ENCODE measurements at regions of chr15 and their contacts with region 1.

Region 1: GRCh38 chr15:40307421-40308211 is at the start of gene PLCB2:
- DNase-seq: peak; percentile 57 to 83 (median 79)
- ATAC-seq: peak; percentile 83
- H3K4me3 ChIP-seq: peak within 1 kb of the TSS; percentile 99
- H3K4me3 Mint-ChIP-seq: peak within 1 kb of the TSS; percentile 93 to 99 (median 96)
- H3K27ac ChIP-seq: peak within 1 kb of the TSS; percentile 94
- H3K27ac Mint-ChIP-seq: peak within 1 kb of the TSS; percentile 93 to 99 (median 97)
- H3K4me1 ChIP-seq: peaks cover 16 to 22% of the 10 kb centered on the region in 2 donors
- H3K4me1 Mint-ChIP-seq: peaks cover 31 to 62% (median 48%) of the 10 kb centered on the region in 7 donors
- H3K27me3 ChIP-seq: no peaks in the 10 kb centered on the region
- H3K27me3 Mint-ChIP-seq: peaks cover 0 to 13% (median 0%) of the 10 kb centered on the region in 5 donors
- total RNA-seq, gene PLCB2: 179 to 359 (median 186) TPM

Region 2: DNA sequence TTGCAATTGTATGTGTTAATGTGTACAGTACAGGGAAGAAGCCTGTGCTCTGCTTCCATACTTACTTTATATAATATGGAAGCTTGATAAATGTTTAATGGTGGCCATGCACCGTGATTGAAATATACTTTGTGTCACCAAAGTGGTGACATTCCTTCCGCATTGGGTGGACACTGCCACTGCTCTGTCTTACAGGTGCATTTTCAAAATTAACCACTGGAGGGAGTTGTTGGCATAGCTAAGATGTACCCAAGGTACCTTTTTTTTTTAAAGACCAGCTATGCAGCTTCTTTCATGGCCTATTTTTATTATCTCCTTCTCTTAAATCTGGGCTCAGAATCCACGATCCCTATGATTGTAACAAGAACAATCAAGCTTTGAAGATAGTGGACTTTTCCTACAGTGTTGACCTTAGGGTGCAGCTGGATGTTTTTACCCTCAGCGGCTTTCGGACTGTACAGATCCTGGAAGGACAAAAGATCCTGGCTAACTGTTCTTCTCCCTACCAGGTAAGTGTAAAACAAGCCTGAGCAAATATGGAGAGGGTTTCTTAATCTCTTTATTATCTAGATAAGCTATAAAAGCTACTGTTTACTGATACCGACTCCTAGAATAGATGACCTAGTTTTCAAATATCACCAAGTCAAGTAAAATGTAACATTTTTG is 90.3 kb before region 1 on chr15:
- CTCF ChIA-PET with region 1: interaction called, 7 read pairs
- POLR2A ChIA-PET with region 1: interaction called, 4 read pairs
- intact Hi-C with region 1: loop called in 1 of 2 experiments (anchors 1 kb)
- DNase-seq: peak in 7 of 9 donors; percentile 50 to 75 (median 63)
- ATAC-seq: peak; percentile 96
- H3K4me3 ChIP-seq: no peak overlapping the region
- H3K4me3 Mint-ChIP-seq: no peak overlapping the region
- H3K27ac ChIP-seq: no peak overlapping the region
- H3K27ac Mint-ChIP-seq: no peak overlapping the region
- H3K4me1 ChIP-seq: no peaks in the 10 kb centered on the region
- H3K4me1 Mint-ChIP-seq: peaks cover 0 to 2% (median 0%) of the 10 kb centered on the region in 7 donors
- H3K27me3 ChIP-seq: no peaks in the 10 kb centered on the region
- H3K27me3 Mint-ChIP-seq: no peaks in the 10 kb centered on the region

Region 3: DNA sequence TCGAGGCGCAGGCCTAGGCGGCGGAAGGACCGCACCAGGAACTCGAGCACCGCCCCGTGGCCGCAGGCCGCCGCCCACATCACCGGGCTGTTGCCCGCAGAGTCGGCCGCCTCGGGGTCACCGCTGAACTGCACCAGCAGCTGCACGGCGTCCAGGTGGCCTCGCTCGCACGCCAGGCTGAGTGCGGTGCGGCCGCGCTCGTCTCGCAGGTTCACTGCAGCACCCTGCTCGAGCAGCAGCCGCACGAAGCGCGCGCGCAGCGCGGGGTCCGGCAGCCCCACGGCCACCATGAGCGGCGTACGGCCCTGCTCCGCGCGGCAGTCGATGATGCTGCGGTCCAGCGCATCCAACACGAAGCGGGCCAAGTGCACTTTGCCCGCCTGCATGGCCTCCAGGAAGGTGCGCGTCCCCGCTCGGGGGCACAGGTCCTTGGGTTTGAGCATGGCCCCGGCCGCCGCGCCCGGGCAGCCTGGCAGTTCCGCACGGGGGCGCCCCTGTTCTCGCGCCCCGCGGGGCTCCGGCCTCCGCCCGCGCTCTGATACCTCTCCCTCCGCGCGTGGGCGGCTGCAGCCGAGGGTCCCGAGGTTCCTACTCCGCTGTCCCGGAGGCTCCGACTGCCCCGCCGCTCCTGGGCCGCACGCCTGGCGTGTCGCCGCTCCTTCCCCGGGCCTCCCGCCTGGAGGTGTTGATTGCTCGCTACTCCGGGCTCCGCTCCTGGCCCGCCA is 25.3 kb before region 1 on chr15:
- CTCF ChIA-PET with region 1: interaction called, 143 read pairs
- POLR2A ChIA-PET with region 1: interaction called, 30 read pairs
- intact Hi-C with region 1: loop called (anchors 1 kb)
- DNase-seq: peak in 7 of 9 donors; percentile 39 to 66 (median 50)
- ATAC-seq: peak; percentile 79
- H3K4me3 ChIP-seq: peak overlapping the region; percentile 57
- H3K4me3 Mint-ChIP-seq: peak overlapping the region in 9 of 10 donors; percentile 42 to 77 (median 67)
- H3K27ac ChIP-seq: no peak overlapping the region
- H3K27ac Mint-ChIP-seq: no peak overlapping the region
- H3K4me1 ChIP-seq: peaks cover 0 to 3% of the 10 kb centered on the region in 2 donors
- H3K4me1 Mint-ChIP-seq: peaks cover 0 to 11% (median 5%) of the 10 kb centered on the region in 7 donors
- H3K27me3 ChIP-seq: peaks cover 0 to 13% of the 10 kb centered on the region in 2 donors
- H3K27me3 Mint-ChIP-seq: peaks cover 17 to 46% (median 21%) of the 10 kb centered on the region in 5 donors

Region 4: DNA sequence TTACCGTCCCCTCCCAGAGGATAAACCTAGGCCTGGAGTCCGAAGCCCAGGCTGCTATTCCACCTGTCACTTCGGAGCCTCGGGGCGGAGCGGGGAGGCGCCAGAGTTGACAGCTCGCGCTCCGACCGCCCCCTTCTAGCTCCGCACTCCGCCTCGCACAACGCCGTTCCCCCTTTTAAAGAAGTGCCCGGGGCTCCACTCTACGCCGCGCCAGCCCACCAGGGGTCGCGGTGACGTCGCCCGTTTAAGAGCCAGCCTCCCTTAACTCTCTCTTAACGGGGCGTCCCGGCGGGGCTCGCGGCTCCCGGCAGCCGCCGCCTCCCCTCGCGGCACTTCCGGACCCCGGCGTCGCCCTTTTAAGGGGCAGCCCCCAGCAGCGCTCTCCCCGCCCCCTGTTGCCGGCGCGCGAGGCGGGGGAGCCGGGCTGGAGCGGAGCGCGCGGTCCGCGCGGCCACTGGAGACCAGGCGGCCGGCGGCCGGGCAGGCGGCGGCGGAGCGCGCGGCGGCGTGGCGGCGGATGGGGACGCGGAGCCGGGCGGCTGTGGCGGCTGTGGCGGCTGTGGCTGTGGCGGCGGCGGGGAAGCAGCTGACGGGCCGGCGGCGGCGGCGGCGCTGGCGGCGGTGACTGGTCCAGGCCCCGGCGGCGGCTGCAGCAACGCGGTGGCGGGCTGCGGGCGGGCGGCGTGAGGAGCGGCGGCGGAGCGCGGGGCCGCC is 15.8 kb after region 1 on chr15 and contains the start of gene INAFM2:
- CTCF ChIA-PET with region 1: interaction called, 76 read pairs
- POLR2A ChIA-PET with region 1: interaction called, 93 read pairs
- intact Hi-C with region 1: loop called (anchors 1 kb)
- DNase-seq: peak; percentile 77 to 91 (median 89)
- ATAC-seq: peak; percentile 95
- H3K4me3 ChIP-seq: peak within 1 kb of the TSS; percentile 34
- H3K4me3 Mint-ChIP-seq: peak within 1 kb of the TSS; percentile 69 to 89 (median 84)
- H3K27ac ChIP-seq: peak within 1 kb of the TSS; percentile 66
- H3K27ac Mint-ChIP-seq: peak within 1 kb of the TSS in 8 of 9 donors; percentile 56 to 86 (median 80)
- H3K4me1 ChIP-seq: peaks cover 15% of the 10 kb centered on the region in 2 donors
- H3K4me1 Mint-ChIP-seq: peaks cover 19 to 51% (median 43%) of the 10 kb centered on the region in 7 donors
- H3K27me3 ChIP-seq: no peaks in the 10 kb centered on the region
- H3K27me3 Mint-ChIP-seq: peaks cover 0 to 23% (median 0%) of the 10 kb centered on the region in 5 donors
- total RNA-seq, gene INAFM2: 7.1 to 21.2 (median 12.7) TPM

Region 5: GRCh38 chr15:40338041-40338657 is 30.5 kb after region 1 on chr15:
- CTCF ChIA-PET with region 1: interaction called, 366 read pairs
- POLR2A ChIA-PET with region 1: interaction called, 31 read pairs
- intact Hi-C with region 1: loop called (anchors 1 kb)
- DNase-seq: peak; percentile 61 to 79 (median 76)
- ATAC-seq: peak; percentile 87
- H3K4me3 ChIP-seq: no peak overlapping the region
- H3K4me3 Mint-ChIP-seq: peak overlapping the region in 4 of 10 donors; percentile 37 to 67 (median 48)
- H3K27ac ChIP-seq: no peak overlapping the region
- H3K27ac Mint-ChIP-seq: peak overlapping the region in 4 of 9 donors; percentile 6 to 53 (median 42)
- H3K4me1 ChIP-seq: peaks cover 0 to 16% of the 10 kb centered on the region in 2 donors
- H3K4me1 Mint-ChIP-seq: peaks cover 0 to 22% (median 20%) of the 10 kb centered on the region in 7 donors
- H3K27me3 ChIP-seq: no peaks in the 10 kb centered on the region
- H3K27me3 Mint-ChIP-seq: no peaks in the 10 kb centered on the region

Region 6: GRCh38 chr15:40367686-40368611 is 60.3 kb after region 1 on chr15:
- CTCF ChIA-PET with region 1: interaction called, 6 read pairs
- POLR2A ChIA-PET with region 1: interaction called, 3 read pairs
- intact Hi-C with region 1: loop called in 1 of 2 experiments (anchors 2 kb)
- DNase-seq: peak; percentile 82 to 89 (median 86)
- ATAC-seq: peak; percentile 98
- H3K4me3 ChIP-seq: peak overlapping the region; percentile 59
- H3K4me3 Mint-ChIP-seq: peak overlapping the region; percentile 80 to 91 (median 85)
- H3K27ac ChIP-seq: no peak overlapping the region
- H3K27ac Mint-ChIP-seq: peak overlapping the region in 8 of 9 donors; percentile 45 to 91 (median 79)
- H3K4me1 ChIP-seq: peaks cover 19 to 24% of the 10 kb centered on the region in 2 donors
- H3K4me1 Mint-ChIP-seq: peaks cover 14 to 33% (median 26%) of the 10 kb centered on the region in 7 donors
- H3K27me3 ChIP-seq: no peaks in the 10 kb centered on the region
- H3K27me3 Mint-ChIP-seq: peaks cover 0 to 16% (median 0%) of the 10 kb centered on the region in 5 donors

Region 7: DNA sequence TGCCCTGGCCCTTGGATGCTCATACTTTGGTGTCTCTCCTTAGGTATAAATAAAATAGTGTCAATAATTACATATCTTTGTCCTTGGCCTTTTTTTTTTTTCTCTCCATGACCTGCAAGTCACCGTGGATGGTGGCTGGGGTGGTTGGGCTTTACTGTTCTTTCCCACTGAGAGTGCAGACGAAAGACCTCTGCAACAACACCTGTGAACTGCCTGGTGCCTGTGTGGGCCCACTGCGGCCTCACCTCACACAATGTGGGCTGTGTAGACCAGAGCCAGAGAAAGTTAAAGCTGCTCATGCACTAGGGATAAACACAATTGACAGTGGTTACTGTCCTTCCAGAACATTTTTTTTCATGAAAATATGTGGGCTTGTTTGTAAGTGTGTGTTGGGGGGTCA is 218.2 kb after region 1 on chr15:
- CTCF ChIA-PET with region 1: no interaction called
- POLR2A ChIA-PET with region 1: no interaction called
- intact Hi-C with region 1: no loop called
- DNase-seq: no peak
- ATAC-seq: no peak
- H3K4me3 ChIP-seq: no peak overlapping the region
- H3K4me3 Mint-ChIP-seq: no peak overlapping the region
- H3K27ac ChIP-seq: no peak overlapping the region
- H3K27ac Mint-ChIP-seq: no peak overlapping the region
- H3K4me1 ChIP-seq: no peaks in the 10 kb centered on the region
- H3K4me1 Mint-ChIP-seq: peaks cover 0 to 4% (median 0%) of the 10 kb centered on the region in 7 donors
- H3K27me3 ChIP-seq: no peaks in the 10 kb centered on the region
- H3K27me3 Mint-ChIP-seq: peaks cover 0 to 9% (median 0%) of the 10 kb centered on the region in 5 donors

Region 8: GRCh38 chr15:41620536-41621199 is 1313.1 kb after region 1 on chr15:
- CTCF ChIA-PET with region 1: no interaction called
- POLR2A ChIA-PET with region 1: no interaction called
- intact Hi-C with region 1: no loop called
- DNase-seq: peak in 2 of 9 donors; percentile 6 to 10
- ATAC-seq: peak; percentile 4
- H3K4me3 ChIP-seq: peak overlapping the region; percentile 67
- H3K4me3 Mint-ChIP-seq: peak overlapping the region; percentile 55 to 87 (median 78)
- H3K27ac ChIP-seq: no peak overlapping the region
- H3K27ac Mint-ChIP-seq: peak overlapping the region in 7 of 9 donors; percentile 47 to 84 (median 77)
- H3K4me1 ChIP-seq: peaks cover 5 to 8% of the 10 kb centered on the region in 2 donors
- H3K4me1 Mint-ChIP-seq: peaks cover 5 to 29% (median 18%) of the 10 kb centered on the region in 7 donors
- H3K27me3 ChIP-seq: no peaks in the 10 kb centered on the region
- H3K27me3 Mint-ChIP-seq: peaks cover 0 to 29% (median 0%) of the 10 kb centered on the region in 5 donors

Measured in naive thymus-derived CD4-positive, alpha-beta T cell (primary cell).